Activated CD4-positive, alpha-beta T cell treated with anti-CD3 and anti-CD28 coated beads for 36 hours (primary cell): ENCODE measurements at regions of chr22 and their contacts with region 1.

Region 1: GRCh38 chr22:42614312-42615091 is at the start of gene POLDIP3:
- DNase-seq: peak; percentile 100
- ATAC-seq: peak; percentile 75
- H3K4me3 Mint-ChIP-seq: peak within 1 kb of the TSS; percentile 97
- H3K27ac Mint-ChIP-seq: peak within 1 kb of the TSS; percentile 99
- H3K4me1 Mint-ChIP-seq: peaks cover 54% of the 10 kb centered on the region
- H3K27me3 Mint-ChIP-seq: no peaks in the 10 kb centered on the region
- total RNA-seq, gene POLDIP3: 77.6 to 88.6 TPM

Region 2: GRCh38 chr22:41448189-41448808 is 1166.2 kb before region 1 on chr22:
- CTCF ChIA-PET with region 1: no interaction called
- POLR2A ChIA-PET with region 1: interaction called, 5 read pairs
- intact Hi-C with region 1: loop called in 1 of 2 experiments (anchors 10 kb)
- DNase-seq: peak; percentile 95
- ATAC-seq: peak; percentile 73
- H3K4me3 Mint-ChIP-seq: peak overlapping the region; percentile 86
- H3K27ac Mint-ChIP-seq: peak overlapping the region; percentile 97
- H3K4me1 Mint-ChIP-seq: peaks cover 8% of the 10 kb centered on the region
- H3K27me3 Mint-ChIP-seq: no peaks in the 10 kb centered on the region

Region 3: GRCh38 chr22:42070517-42071422 is 543.7 kb before region 1 on chr22 and contains the start of gene NAGA:
- CTCF ChIA-PET with region 1: no interaction called
- POLR2A ChIA-PET with region 1: no interaction called
- intact Hi-C with region 1: loop called in 1 of 2 experiments (anchors 2 kb)
- DNase-seq: peak; percentile 97
- ATAC-seq: peak; percentile 99
- H3K4me3 Mint-ChIP-seq: peak within 1 kb of the TSS; percentile 84
- H3K27ac Mint-ChIP-seq: peak within 1 kb of the TSS; percentile 89
- H3K4me1 Mint-ChIP-seq: peaks cover 28% of the 10 kb centered on the region
- H3K27me3 Mint-ChIP-seq: no peaks in the 10 kb centered on the region
- total RNA-seq, gene NAGA: 19.7 to 20.0 TPM

Region 4: DNA sequence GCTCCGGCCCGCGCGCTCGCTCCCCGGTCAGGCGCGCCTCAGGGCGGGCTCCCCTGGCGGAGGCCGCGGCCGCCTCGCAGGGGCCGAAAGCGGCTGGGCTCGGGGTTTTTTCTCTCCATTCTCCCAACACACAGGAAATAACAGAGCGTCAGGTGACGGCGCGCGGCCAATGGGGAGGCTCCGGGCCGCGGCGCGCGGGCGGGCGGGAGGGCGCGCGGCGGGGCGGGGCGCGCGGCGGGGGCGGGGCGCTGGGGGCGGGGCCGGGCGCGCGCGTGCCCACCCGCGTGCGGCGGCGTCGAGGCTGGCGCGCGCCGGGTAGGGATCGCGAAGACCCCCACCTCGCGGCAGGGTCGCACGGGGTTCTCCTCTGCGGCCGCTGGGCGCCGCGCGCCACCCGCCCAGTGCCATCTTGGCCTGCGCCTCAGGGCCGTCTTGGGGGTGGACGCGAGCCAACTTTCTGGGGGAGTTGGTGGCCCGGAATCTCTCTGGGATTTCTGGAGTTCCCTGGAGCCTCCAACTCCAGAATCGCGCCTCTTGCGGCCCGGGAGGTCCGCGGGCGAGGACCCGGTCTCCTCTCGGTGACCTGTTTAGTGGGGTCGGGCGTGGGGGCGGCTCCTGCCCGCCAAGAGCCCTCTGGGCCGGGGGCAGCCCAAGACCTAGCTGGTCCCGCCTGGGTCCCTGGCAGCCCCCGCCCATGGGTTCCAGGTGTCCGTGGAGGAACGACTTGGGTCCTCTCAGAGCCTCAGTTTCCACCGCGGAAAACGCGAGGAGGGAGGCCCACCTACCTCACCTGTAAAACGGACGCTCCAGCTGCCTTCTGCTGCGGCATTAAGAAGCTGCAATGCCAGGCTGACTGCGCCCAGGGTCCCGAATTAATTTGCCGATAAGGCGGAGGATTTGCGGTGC is 343.7 kb before region 1 on chr22 and contains the start of gene TCF20:
- CTCF ChIA-PET with region 1: no interaction called
- POLR2A ChIA-PET with region 1: no interaction called
- intact Hi-C with region 1: loop called in 1 of 2 experiments (anchors 1 kb)
- DNase-seq: peak; percentile 88
- ATAC-seq: peak; percentile 85
- H3K4me3 Mint-ChIP-seq: peak within 1 kb of the TSS; percentile 96
- H3K27ac Mint-ChIP-seq: peak within 1 kb of the TSS; percentile 82
- H3K4me1 Mint-ChIP-seq: peaks cover 30% of the 10 kb centered on the region
- H3K27me3 Mint-ChIP-seq: no peaks in the 10 kb centered on the region
- total RNA-seq, gene TCF20: 64.1 to 68.3 TPM

Region 5: DNA sequence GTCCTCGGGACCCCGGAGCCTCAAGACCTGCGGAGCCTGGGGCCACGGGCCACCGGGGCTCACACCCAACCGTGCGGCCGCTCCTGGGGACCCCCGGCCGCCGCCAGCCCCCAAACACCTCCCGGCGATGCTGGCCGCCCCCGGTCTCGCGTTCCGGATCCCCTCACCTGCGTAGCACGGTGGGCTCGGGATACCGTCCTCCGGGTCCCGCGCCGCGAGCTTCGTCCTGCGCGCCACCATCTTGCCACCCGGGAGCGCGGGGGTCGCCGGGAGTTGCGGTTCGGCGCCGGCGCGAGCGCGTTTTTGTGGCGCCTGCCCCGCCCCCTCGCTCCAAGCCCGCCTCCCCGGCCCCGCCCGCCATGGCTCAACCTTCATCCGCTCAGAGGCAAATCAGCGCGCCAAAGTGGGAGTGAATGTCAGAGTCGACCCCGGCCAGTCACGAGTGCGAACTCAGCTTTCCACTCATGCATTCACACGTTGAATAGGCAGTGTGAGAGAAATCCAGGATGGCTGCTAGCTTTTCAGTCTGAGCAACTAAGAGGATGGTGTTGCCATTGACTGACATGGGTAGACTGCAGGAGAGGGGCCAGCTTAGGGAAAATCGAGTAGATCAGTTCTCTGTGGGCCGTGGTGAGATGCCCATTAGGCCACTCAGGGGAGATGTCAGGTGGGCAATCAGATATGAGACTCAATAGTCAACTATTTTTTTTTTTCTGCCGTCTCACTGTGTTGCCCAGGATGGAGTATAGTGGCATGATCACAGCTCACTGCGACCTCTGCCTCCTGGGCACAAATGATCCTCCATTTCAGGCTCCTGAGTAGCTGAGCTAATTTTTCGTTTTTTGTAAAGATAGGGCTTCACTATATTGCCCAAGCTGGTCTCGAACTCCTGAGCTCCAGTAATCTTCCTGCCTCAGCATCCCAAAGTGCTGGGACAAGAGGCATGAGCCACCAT is 32.5 kb before region 1 on chr22:
- CTCF ChIA-PET with region 1: interaction called, 3 read pairs
- POLR2A ChIA-PET with region 1: interaction called, 13 read pairs
- intact Hi-C with region 1: loop called (anchors 1 kb)
- DNase-seq: peak; percentile 94
- ATAC-seq: peak; percentile 88
- H3K4me3 Mint-ChIP-seq: peak overlapping the region; percentile 94
- H3K27ac Mint-ChIP-seq: peak overlapping the region; percentile 87
- H3K4me1 Mint-ChIP-seq: peaks cover 9% of the 10 kb centered on the region
- H3K27me3 Mint-ChIP-seq: no peaks in the 10 kb centered on the region

Region 6: GRCh38 chr22:42649246-42650099 is 35.0 kb after region 1 on chr22 and contains the start of gene CYB5R3:
- CTCF ChIA-PET with region 1: interaction called, 4 read pairs
- POLR2A ChIA-PET with region 1: interaction called, 53 read pairs
- intact Hi-C with region 1: loop called (anchors 1 to 2 kb)
- DNase-seq: peak; percentile 91
- ATAC-seq: peak; percentile 87
- H3K4me3 Mint-ChIP-seq: peak within 1 kb of the TSS; percentile 92
- H3K27ac Mint-ChIP-seq: peak within 1 kb of the TSS; percentile 92
- H3K4me1 Mint-ChIP-seq: peaks cover 22% of the 10 kb centered on the region
- H3K27me3 Mint-ChIP-seq: no peaks in the 10 kb centered on the region
- total RNA-seq, gene CYB5R3: 79.5 to 101 TPM

Region 7: GRCh38 chr22:43088979-43089717 is 474.6 kb after region 1 on chr22 and contains the start of gene TTLL1:
- CTCF ChIA-PET with region 1: no interaction called
- POLR2A ChIA-PET with region 1: no interaction called
- intact Hi-C with region 1: loop called in 1 of 2 experiments (anchors 1 kb)
- DNase-seq: peak; percentile 96
- ATAC-seq: peak; percentile 95
- H3K4me3 Mint-ChIP-seq: peak within 1 kb of the TSS; percentile 84
- H3K27ac Mint-ChIP-seq: peak within 1 kb of the TSS; percentile 94
- H3K4me1 Mint-ChIP-seq: peaks cover 21% of the 10 kb centered on the region
- H3K27me3 Mint-ChIP-seq: no peaks in the 10 kb centered on the region
- total RNA-seq, gene TTLL1: 5.7 to 6.6 TPM